K562 (cell line): ENCODE measurements at regions of chr6 and their contacts with region 1.

Region 1: DNA sequence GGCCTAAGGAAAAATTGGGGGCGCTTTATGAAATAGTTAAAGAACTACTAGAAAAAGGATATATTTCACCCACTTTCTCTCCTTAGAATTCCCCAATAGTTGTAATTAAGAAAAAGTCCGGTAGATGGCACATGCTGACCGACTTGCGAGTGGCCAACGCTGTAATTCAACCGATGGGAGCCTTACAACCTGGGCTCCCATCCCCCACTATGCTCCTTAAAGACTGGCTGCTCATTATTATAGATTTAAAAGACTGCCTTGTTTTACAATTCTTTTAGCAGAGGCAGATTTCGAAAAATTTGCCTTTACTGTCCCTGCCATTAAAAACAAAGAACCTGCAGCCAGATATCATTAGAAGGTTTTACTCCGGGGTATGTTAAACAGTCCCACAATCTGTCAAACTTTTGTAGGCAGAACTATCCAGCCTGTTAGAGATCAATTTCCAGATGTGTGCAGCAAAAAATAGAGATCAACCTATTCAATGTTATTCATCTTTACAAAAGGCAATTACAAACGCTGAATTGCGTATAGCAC is 58.5 kb upstream of the PRSS16 start:
- DNase-seq: peak; percentile 69 to 93 (median 78)
- ATAC-seq: peak; percentile 85
- H3K4me3 ChIP-seq: peak overlapping the region; percentile 56
- H3K27ac ChIP-seq: peak overlapping the region; percentile 80
- H3K4me1 ChIP-seq: peaks cover 8% of the 10 kb centered on the region in 2 experiments; a peak in 4 of 5 replicates
- H3K27me3 ChIP-seq: no peaks in the 10 kb centered on the region
- CTCF ChIP-seq: peak; percentile 78 to 92 (median 85)
- EP300 ChIP-seq: no peak; the same call in 1 of the 2 replicates
- POLR2A ChIP-seq: no peak
- RAD21 ChIP-seq: peak; percentile 93 to 95

Region 2: GRCh38 chr6:27126815-27127537 is 62.0 kb before region 1 on chr6:
- CTCF ChIA-PET with region 1: interaction called, 4 read pairs
- POLR2A ChIA-PET with region 1: interaction called, 12 read pairs
- in situ Hi-C with region 1: no loop called
- intact Hi-C with region 1: loop called (anchors 1 kb)
- DNase-seq: peak; percentile 76 to 97 (median 78)
- ATAC-seq: peak; percentile 77
- H3K4me3 ChIP-seq: peak overlapping the region; percentile 26
- H3K27ac ChIP-seq: peak overlapping the region; percentile 66
- H3K4me1 ChIP-seq: peaks cover 0 to 3% of the 10 kb centered on the region in 2 experiments; a peak in 2 of 5 replicates
- H3K27me3 ChIP-seq: no peaks in the 10 kb centered on the region
- CTCF ChIP-seq: peak; percentile 95 to 99 (median 97)
- EP300 ChIP-seq: no peak
- POLR2A ChIP-seq: peak; percentile 52; the same call in 1 of the 2 replicates
- RAD21 ChIP-seq: peak; percentile 91 to 94

Region 3: DNA sequence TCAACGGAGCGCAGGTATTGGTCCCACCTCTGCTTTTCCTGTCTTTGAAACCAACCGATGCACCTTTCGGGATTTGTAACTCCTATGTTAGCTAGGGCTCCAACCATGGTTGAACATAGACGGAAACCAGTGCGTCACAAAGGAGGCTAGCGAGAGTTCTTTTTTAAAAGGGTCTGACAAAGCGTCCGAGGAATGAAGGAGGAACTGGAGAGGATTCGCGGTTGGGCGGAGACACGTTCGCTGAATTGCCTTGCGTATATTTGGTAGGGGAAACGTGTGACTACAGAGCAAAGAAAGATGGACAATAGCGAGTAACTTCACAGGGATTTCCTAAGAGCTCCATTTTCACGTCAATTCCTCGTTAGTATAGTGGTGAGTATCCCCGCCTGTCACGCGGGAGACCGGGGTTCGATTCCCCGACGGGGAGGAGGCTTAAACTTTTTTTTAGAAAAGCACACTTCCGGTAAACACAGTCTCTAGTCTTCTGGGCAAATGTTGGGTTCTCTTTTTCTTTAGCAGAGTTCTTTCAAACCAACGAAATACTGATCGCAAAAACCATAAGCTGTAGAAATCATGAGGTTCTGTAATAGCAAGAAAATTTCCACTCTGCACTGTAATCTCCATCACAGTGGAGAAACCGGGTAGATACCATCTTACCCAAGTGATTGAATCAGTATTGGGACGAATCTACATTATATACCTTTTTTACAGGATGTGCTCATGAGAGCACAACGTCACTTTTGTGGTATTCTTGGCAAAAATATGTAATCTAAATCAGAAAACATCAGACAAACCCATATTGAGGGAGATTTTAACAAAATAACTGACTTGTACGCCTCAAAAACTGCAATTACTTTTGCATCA is 290.6 kb after region 1 on chr6:
- CTCF ChIA-PET with region 1: no interaction called
- POLR2A ChIA-PET with region 1: no interaction called
- in situ Hi-C with region 1: no loop called
- intact Hi-C with region 1: loop called (anchors 1 kb)
- DNase-seq: peak; percentile 57 to 89 (median 66)
- ATAC-seq: peak; percentile 76
- H3K4me3 ChIP-seq: peak overlapping the region; percentile 64
- H3K27ac ChIP-seq: peak overlapping the region; percentile 85
- H3K4me1 ChIP-seq: peaks cover 4 to 8% of the 10 kb centered on the region in 2 experiments; a peak in 2 of 5 replicates
- H3K27me3 ChIP-seq: no peaks in the 10 kb centered on the region
- CTCF ChIP-seq: 0 out of 6 replicates have a peak, but pooled peaks of 1 of the 3 experiments have one; percentile 5
- EP300 ChIP-seq: peak; percentile 34
- POLR2A ChIP-seq: peak; percentile 54; the same call in 1 of the 2 replicates
- RAD21 ChIP-seq: no peak; a peak in 2 of 4 replicates